Activated CD4-positive, alpha-beta T cell treated with anti-CD3 and anti-CD28 coated beads, Interleukin-2, amount 10 ng/mL, durations not matched to agents 24 days and 14 days (primary cell): ENCODE measurements at regions of chr19 and their contacts with region 1.

Region 1: DNA sequence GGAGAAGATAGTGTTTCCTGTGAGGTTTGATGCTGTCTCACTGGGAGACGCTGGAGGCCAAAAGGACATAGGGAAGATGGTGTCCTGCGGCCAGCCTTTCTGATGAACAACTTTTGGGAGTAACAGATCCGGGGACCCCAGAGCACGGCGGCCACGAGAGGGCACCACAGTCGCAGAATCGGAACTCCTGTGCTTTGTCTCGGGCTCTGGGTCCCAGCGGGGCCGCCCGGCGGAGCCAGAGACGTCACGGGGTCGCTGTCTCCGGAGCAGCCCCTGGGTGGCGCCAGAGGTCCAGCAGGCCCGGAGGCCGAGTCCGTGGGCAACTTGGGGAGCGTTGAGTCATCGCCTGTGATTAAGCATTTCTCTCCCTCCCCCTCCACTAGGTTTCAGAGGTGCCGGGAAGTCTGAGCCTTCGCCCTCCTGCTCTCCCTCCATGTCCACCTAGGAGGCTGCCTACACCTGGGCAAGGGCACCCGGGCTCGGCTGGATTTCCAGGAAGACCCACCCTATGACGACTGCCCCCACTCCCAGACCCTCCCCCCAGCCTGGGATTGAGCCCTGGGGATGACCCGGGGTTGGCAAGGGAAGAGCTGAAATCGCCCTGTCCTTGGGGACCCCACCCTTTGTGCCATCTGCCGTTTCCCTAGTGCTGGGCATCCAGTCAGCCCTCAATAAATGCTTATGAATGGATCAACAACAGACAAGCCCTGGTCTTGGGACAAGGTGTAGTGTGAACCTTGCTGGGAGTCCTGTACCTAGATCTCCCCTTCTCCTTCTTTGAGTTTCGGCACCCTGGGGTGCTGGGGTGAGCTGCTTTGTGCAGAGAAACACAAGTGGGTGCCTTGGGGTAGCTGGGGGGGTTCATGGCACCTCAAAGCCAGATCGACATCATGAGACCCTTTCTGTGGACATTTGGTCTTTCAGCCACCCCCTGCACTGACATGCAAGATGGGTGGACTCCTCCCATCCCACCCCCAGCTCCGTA is 3.4 kb downstream of the NANOS3 start:
- DNase-seq: peak; percentile 100
- H3K4me3 Mint-ChIP-seq: peak overlapping the region; percentile 70
- H3K27ac Mint-ChIP-seq: peak overlapping the region; percentile 89
- H3K4me1 Mint-ChIP-seq: peaks cover 34% of the 10 kb centered on the region
- H3K27me3 Mint-ChIP-seq: no peaks in the 10 kb centered on the region

Region 2: DNA sequence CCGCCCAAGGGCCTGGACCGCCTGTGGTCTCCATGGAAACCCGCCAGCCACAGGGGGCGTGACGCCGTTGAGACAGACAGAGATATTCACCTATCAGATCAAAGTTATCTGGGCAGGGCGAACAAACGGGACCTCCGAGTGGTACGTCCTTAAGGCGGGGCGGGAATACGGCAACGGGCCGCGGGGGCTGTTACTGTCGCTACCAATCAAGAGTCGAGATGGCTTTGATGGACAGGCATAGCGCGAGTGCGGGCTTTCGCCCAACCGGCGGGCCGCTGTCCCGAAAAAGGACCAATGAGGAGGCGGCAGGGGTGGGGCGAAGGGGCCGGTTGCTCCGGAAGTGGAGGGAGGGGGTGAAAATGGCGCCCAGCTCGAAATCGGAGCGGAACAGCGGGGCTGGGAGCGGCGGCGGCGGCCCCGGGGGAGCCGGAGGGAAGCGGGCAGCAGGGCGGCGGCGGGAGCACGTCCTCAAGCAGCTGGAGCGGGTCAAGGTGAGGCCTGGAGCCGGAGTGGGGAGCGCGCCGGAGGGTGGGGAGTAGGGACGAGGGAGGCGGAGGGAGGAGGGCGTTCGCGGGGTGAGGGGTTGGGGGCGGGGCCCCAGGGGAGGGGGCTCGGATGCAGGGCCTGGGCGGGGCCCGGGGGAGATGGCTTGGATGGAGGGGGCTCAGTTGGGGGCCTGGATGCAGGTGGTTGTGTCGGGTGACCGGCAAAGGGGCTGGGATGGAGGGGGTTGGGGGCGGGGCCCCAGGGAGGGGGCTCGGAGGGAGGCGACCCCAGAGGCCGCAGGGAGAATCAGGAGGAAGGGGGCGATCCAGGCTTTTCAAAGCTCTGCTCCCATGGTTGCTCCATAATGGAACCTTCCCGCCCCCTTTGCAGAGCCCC is 72.0 kb after region 1 on chr19 and contains the start of gene DCAF15:
- intact Hi-C with region 1: loop called (anchors 1 kb)
- DNase-seq: peak; percentile 100
- H3K4me3 Mint-ChIP-seq: peak within 1 kb of the TSS; percentile 99
- H3K27ac Mint-ChIP-seq: peak within 1 kb of the TSS; percentile 97
- H3K4me1 Mint-ChIP-seq: peaks cover 14% of the 10 kb centered on the region
- H3K27me3 Mint-ChIP-seq: peaks cover 4% of the 10 kb centered on the region
- total RNA-seq, gene DCAF15: 61.5 and 63.2 TPM in 2 replicates

Region 3: DNA sequence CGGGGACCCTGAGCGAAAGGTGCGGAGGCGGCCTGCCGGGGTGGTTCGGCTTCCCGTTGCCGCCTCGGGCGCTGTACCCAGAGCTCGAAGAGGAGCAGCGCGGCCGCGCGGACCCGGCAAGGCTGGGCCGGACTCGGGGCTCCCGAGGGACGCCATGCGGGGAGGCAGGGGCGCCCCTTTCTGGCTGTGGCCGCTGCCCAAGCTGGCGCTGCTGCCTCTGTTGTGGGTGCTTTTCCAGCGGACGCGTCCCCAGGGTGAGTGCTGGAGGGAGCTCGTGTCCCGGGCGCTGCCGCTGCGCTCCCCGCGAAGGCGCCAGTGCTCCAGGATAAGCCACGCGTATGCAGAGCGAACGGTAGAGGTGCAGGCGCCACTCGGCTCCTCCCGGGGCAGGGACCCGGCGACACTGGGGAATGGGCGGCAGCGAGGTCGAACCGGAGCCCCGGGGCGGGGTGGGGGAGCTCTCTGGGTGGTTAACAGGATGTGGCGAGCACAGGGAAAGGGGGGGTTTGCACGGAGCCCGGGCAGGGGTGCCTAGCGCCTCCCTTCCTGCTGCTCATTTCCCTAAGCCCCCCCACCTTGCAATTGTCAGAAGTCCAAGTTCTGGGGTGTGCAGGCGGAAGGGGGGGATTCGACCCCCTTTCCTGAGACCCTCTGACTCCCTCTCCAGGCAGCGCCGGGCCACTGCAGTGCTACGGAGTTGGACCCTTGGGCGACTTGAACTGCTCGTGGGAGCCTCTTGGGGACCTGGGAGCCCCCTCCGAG is 151.5 kb after region 1 on chr19 and contains the start of gene IL27RA:
- intact Hi-C with region 1: loop called (anchors 1 kb)
- DNase-seq: peak; percentile 95
- H3K4me3 Mint-ChIP-seq: peak within 1 kb of the TSS; percentile 97
- H3K27ac Mint-ChIP-seq: peak within 1 kb of the TSS; percentile 95
- H3K4me1 Mint-ChIP-seq: peaks cover 18% of the 10 kb centered on the region
- H3K27me3 Mint-ChIP-seq: peaks cover 7% of the 10 kb centered on the region
- total RNA-seq, gene IL27RA: 81.6 and 86.4 TPM in 2 replicates

Region 4: GRCh38 chr19:14073261-14073924 is 193.0 kb after region 1 on chr19:
- intact Hi-C with region 1: loop called (anchors 1 kb)
- DNase-seq: peak; percentile 94
- H3K4me3 Mint-ChIP-seq: peak overlapping the region; percentile 99
- H3K27ac Mint-ChIP-seq: peak overlapping the region; percentile 99
- H3K4me1 Mint-ChIP-seq: peaks cover 16% of the 10 kb centered on the region
- H3K27me3 Mint-ChIP-seq: peaks cover 6% of the 10 kb centered on the region

Region 5: DNA sequence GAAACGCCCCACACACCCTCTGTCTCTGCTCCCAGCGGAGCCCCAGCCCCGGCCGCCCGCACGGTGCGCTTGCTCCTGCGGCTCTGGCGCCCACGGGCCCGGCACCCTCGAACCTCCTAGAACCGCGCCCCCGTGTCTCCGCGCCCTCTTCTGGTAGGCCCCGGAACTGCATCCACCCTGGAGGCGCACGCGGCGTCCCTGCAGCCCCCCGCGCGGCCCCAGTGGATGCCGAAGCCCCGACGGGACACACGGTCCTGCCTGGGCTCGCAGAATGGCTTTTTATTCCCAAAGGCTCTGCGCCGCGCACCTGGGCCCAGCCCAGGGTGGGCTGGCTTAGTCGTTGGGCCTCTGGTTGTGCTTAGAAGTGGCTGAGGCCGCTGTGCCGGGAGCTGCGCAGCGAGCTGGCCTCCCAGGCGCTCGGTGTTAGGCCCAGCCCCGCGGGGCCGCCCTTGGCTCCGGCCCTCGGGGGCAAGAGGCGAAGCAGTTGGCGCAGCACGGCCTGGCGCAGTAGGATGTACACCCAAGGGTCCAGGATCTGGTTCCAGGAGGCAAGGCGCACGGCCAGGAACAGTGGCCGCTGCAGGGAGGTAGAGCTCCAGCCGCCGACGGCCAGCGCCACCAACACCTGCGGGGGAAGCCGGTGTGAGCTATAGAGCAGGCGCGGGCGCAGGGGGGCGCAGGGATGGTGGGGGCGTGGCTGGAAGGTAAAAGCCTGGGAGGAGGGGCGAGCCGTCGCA is 592.0 kb after region 1 on chr19:
- intact Hi-C with region 1: loop called (anchors 10 kb)
- DNase-seq: peak; percentile 96
- H3K4me3 Mint-ChIP-seq: no peak overlapping the region
- H3K27ac Mint-ChIP-seq: no peak overlapping the region
- H3K4me1 Mint-ChIP-seq: peaks cover 26% of the 10 kb centered on the region
- H3K27me3 Mint-ChIP-seq: peaks cover 16% of the 10 kb centered on the region